Endothelial cell of umbilical vein (primary cell): ENCODE measurements at regions of chrX and their contacts with region 1.

Region 1: GRCh38 chrX:119145241-119145653 is 17.6 kb upstream of the KIAA1210 start:
- DNase-seq: no peak
- H3K4me3 ChIP-seq: no peak overlapping the region
- H3K27ac ChIP-seq: no peak overlapping the region
- H3K4me1 ChIP-seq: no peaks in the 10 kb centered on the region
- H3K27me3 ChIP-seq: no peaks in the 10 kb centered on the region
- CTCF ChIP-seq: peak; percentile 11 to 16
- POLR2A ChIP-seq: no peak

Region 2: DNA sequence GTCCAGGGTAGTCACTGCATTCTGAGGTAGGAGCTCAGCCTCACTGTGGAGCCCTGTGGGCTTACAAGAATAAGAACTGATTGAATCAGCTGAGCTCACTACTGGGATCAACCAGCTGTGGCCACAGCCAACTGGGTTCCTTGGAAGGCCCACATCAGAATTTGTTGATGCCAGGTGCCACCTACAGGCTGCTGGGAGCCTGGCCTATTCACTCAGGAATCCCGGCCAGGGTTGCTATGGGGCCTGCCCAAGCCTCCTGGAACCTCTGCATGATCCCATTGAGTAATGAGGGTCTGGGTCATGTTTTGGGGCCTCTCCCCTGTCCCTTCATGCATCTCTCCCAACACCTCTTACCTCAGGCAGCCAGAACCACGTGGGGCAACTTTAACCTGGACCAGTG is 36.2 kb after region 1 on chrX:
- CTCF ChIA-PET with region 1: no interaction called
- POLR2A ChIA-PET with region 1: no interaction called
- dilution Hi-C with region 1: no loop called
- intact Hi-C with region 1: loop called (anchors 2 kb)
- DNase-seq: no peak
- H3K4me3 ChIP-seq: no peak overlapping the region
- H3K27ac ChIP-seq: no peak overlapping the region
- H3K4me1 ChIP-seq: no peaks in the 10 kb centered on the region
- H3K27me3 ChIP-seq: no peaks in the 10 kb centered on the region
- CTCF ChIP-seq: peak in 1 of 2 donors; percentile 10
- POLR2A ChIP-seq: no peak

Region 3: GRCh38 chrX:119222932-119223331 is 77.7 kb after region 1 on chrX:
- CTCF ChIA-PET with region 1: no interaction called
- POLR2A ChIA-PET with region 1: no interaction called
- dilution Hi-C with region 1: no loop called
- intact Hi-C with region 1: loop called (anchors 1 kb)
- DNase-seq: no peak
- H3K4me3 ChIP-seq: no peak overlapping the region
- H3K27ac ChIP-seq: no peak overlapping the region
- H3K4me1 ChIP-seq: no peaks in the 10 kb centered on the region
- H3K27me3 ChIP-seq: peaks cover 0 to 5% of the 10 kb centered on the region in 2 experiments
- CTCF ChIP-seq: no peak
- POLR2A ChIP-seq: no peak